Dorsolateral prefrontal cortex (tissue), 120 donors: ENCODE measurements at regions of chr6 and their contacts with region 1.

Region 1: DNA sequence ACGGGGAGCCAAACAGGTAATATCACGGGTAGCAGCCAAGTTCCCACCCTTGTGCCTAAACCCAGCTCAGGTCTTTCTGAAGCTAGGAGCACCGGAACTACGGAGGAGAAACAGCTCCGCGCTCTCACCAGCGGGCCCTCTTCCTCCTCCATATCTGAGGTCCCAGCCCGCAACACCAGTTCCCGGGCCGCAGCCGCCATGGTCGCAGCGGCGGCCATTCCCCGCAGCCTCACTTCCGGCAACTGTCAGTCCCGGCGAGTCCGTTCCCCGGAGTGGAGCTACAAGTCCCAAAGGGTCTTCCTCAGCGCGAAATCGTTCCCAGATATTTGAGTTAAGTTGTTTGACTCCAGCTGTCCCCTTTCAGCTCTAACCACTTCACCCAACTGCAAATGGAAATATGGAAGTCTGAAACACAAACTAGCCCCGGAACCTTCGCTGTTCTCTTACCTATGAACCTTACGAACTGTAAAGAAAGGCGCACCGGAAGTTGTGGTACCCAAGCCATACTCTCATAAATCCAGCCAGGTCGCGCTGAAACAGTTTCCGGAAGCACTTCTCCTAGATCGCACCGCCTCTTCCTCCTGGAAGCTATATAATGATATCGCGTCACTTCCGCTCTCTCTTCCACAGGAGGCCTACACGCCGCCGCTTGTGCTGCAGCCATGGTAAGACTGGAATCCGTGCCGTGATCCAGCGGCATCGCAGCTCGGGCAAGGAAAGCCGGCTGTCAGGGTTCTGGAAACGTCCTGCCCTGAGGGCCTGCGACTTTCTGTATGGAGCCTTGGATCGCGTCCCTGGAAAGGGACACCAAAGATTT is at the starts of genes RPS18 and VPS52:
- DNase-seq: peak; percentile 81 to 98 (median 95)
- H3K4me3 ChIP-seq: peak within 1 kb of the TSS; percentile 66 to 100 (median 89)
- H3K27ac ChIP-seq: peak within 1 kb of the TSS; percentile 40 to 98 (median 93)
- H3K27me3 ChIP-seq: no peaks in the 10 kb centered on the region
- CTCF ChIP-seq: peak in 20 of 56 donors; percentile 2 to 55 (median 28)
- total RNA-seq, gene RPS18: 295 to 726 (median 479) TPM
- total RNA-seq, gene VPS52: 48.4 to 108 (median 68.9) TPM

Region 2: DNA sequence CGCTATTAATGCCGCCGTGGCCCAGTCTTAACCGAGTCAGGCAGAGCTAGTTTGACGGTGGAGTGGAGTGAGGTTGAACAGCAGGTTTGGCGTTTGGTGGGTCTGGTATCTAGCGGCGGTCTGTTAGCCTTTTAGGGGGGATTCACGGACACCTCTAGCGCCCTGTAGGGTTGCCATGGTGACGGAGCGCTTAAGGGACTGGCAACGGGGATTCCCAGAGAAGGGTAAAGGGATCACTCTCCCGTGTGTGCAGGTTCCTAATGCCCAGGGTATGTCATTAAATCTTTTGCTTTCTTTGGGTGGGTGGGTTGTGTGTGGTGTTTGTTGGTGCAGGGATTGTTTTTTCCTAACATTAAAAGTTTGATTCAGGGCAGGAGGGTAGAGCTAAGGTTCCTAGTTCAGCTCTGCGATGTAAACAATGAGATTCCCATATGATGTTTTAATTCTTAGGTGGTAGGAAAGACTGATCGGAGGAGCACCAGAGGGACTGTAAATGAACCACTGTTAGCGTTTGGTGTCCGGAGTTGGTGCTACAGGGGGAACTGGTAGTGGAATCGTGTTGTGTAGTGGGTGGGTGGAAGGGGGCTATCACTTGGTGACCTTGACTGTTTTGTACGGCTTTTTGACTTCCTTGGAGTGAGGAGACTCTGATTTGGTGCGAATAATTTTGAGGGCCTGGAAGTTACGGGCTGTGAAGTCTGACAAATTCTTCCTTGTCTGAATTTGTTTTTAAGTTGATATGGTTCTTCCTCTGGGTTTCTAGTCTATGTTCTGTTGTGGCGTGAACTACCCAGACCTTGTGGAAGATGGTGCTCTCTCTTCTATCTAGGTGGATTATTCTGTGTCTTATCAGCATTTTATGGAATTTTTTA is 298.3 kb before region 1 on chr6:
- intact Hi-C with region 1: no loop called
- DNase-seq: peak in 2 of 10 donors; percentile 24 to 49
- H3K4me3 ChIP-seq: peak overlapping the region; percentile 56 to 99 (median 94)
- H3K27ac ChIP-seq: peak overlapping the region; percentile 52 to 100 (median 100)
- H3K27me3 ChIP-seq: no peaks in the 10 kb centered on the region
- CTCF ChIP-seq: no peak

Region 3: DNA sequence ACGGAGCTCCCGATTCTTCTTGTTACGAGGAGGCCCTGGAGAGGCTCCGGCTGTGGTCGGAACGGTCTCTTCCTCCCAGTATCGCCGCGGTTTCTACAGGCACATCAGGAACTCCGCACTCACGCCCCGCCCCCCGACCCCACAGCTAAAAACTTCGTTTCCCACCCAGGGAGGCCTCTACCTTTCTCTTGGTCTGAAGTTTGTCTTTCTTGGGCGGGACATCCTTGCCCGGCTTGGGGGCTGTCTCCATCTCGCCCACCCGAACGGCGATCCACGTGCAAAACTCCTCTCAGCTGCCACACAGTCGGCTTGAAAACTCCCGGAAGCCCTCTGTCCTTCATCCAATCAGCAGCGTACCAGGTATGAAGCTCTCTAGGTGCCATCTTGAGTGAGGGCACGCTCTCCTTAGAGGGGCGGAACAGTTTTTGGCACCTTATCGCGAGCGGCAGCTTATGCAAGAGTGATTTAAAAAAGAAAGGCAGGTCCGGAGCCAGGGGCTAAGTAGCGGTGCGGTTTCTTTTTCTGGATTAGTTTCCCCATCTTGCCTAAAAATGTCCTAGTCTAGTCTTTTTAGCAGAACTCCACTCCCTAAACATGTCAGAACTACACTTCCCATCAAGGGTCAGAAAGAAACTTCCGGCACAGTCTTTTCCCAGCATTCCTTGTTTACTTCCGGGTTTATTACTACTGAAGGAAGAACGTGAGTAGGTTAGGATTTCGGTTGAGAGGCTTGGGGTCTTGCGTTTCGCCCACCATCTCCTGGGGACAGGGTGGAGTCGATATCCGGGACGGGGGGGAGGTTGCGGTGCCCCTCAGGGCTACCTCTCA is 17.5 kb after region 1 on chr6 and contains the starts of genes PFDN6 and WDR46:
- intact Hi-C with region 1: loop called (anchors 1 kb)
- DNase-seq: peak; percentile 63 to 92 (median 86)
- H3K4me3 ChIP-seq: peak within 1 kb of the TSS; percentile 66 to 99 (median 89)
- H3K27ac ChIP-seq: peak within 1 kb of the TSS; percentile 44 to 96 (median 90)
- H3K27me3 ChIP-seq: no peaks in the 10 kb centered on the region
- CTCF ChIP-seq: peak in 14 of 56 donors; percentile 7 to 53 (median 22)
- total RNA-seq, gene PFDN6: 29.1 to 82.4 (median 59.2) TPM
- total RNA-seq, gene WDR46: 14.7 to 53.7 (median 30.1) TPM

Region 4: GRCh38 chr6:33323623-33323948 is 51.9 kb after region 1 on chr6:
- intact Hi-C with region 1: loop called in 1 of 2 experiments (anchors 1 kb)
- DNase-seq: no peak
- H3K4me3 ChIP-seq: peak overlapping the region; percentile 53 to 94 (median 79)
- H3K27ac ChIP-seq: peak overlapping the region in 58 of 59 donors; percentile 50 to 94 (median 84)
- H3K27me3 ChIP-seq: no peaks in the 10 kb centered on the region
- CTCF ChIP-seq: no peak